Dendritic cell treated with granulocyte-macrophage colony-stimulating factor and Interleukin-4, amounts not matched to agents 40 ng/mL and 50 ng/mL, for 4 days (primary cell): ENCODE measurements at regions of chr19 and their contacts with region 1.

Region 1: GRCh38 chr19:20923077-20923871 is at the start of gene ZNF85:
- H3K4me3 Mint-ChIP-seq: peak within 1 kb of the TSS; percentile 93
- H3K27ac Mint-ChIP-seq: peak within 1 kb of the TSS; percentile 97
- H3K4me1 Mint-ChIP-seq: peaks cover 11% of the 10 kb centered on the region
- H3K27me3 Mint-ChIP-seq: no peaks in the 10 kb centered on the region

Region 2: GRCh38 chr19:20999731-21000352 is 76.6 kb after region 1 on chr19:
- intact Hi-C with region 1: loop called (anchors 10 kb)
- H3K4me3 Mint-ChIP-seq: peak overlapping the region; percentile 67
- H3K27ac Mint-ChIP-seq: no peak overlapping the region
- H3K4me1 Mint-ChIP-seq: peaks cover 8% of the 10 kb centered on the region
- H3K27me3 Mint-ChIP-seq: peaks cover 2% of the 10 kb centered on the region